ENCODE measurements at regions of chr4 and their contacts with region 1.

Region 1: GRCh38 chr4:15001869-15002658 is at the start of gene CPEB2:
- DNase-seq: peak; percentile 96
- H3K4me3 ChIP-seq: peak within 1 kb of the TSS; percentile 93
- H3K27ac ChIP-seq: peak within 1 kb of the TSS; percentile 91
- H3K4me1 ChIP-seq: peaks cover 22% of the 10 kb centered on the region
- CTCF ChIP-seq: no peak
- total RNA-seq, gene CPEB2: 2.2 and 2.3 TPM in 2 replicates

Region 2: GRCh38 chr4:13484122-13484748 is 1517.8 kb before region 1 on chr4 and contains the start of gene RAB28:
- CTCF ChIA-PET with region 1: no interaction called
- POLR2A ChIA-PET with region 1: interaction called, 4 read pairs
- intact Hi-C with region 1: loop called (anchors 5 kb)
- DNase-seq: peak; percentile 94
- H3K4me3 ChIP-seq: peak within 1 kb of the TSS; percentile 95
- H3K27ac ChIP-seq: peak within 1 kb of the TSS; percentile 56
- H3K4me1 ChIP-seq: peaks cover 20% of the 10 kb centered on the region
- CTCF ChIP-seq: no peak
- total RNA-seq, gene RAB28: 30.8 and 59.4 TPM in 2 replicates

Region 3: DNA sequence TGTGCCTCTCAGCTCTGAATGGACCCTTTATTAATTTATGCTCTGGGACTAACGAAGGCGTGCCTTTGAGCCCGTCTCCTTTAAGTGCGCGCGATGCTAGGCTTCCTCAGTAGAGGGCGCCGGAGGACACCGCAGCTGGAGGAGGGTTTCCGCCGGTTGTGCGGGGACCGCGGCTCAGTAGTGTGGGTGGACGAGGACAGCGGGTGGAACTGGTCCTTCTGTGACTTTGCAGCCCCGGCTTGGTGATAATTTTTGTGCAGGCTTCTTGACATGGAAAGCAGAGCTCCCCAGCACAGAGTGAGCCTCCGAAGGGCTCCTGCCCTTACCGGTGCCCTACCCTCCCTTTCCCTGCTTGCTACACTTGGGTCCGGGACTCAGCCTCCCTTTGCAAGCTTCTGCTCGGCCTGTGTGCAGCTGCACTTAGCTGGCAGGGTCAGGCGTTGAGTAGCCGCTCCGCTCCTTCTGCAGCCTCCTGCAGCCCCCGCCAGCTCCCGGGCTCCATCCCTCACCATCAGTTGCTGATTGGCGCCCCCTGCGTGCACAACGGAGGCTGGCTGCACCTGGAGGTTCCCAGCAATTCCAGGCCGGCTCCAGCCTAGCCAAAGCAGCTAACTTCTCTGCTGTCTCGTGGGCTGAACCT is 1347.8 kb before region 1 on chr4:
- CTCF ChIA-PET with region 1: no interaction called
- POLR2A ChIA-PET with region 1: interaction called, 3 read pairs
- intact Hi-C with region 1: loop called (anchors 10 kb)
- DNase-seq: peak; percentile 77
- H3K4me3 ChIP-seq: peak overlapping the region; percentile 70
- H3K27ac ChIP-seq: no peak overlapping the region
- H3K4me1 ChIP-seq: no peaks in the 10 kb centered on the region
- CTCF ChIP-seq: peak; percentile 83

Region 4: DNA sequence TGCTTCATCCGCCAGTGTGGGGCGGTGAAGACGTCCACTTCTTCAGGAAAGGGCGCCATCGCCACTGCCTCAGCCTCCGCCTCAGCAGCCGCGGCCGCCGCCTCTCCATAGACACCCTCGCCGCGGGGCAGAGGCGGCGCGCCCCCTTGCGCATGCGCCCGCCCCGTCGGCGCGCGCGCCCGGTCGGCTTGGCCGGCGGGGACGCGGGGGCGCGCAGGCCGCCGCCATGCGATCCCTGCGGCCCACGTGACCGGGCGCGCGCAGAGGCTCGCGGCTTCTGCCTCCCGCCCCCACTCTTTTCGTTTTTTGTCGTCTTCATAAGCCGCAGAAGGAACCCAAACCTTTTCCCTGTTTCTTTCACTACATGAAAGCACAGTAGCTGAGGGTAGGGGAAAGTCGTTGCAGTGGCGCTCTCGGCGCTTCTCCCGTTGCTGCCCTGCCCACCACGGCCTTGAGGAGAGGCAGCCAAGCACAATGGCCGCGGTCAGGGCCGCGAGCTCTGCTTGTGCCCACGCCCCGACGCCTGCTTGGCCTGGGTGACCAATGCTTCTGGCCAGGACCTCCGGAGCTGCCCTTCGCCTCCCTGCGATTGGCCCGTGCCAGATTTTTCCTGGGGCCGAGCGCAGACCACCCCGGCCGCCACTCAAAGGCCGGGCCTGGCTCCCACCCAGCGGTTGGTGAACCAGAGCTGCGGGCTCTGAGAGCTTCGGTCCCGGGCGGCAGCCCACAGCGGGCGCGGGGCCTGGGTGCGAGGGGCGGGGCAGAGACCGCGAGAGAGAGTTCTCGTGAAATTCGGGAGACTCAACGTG is 653.4 kb after region 1 on chr4 and contains the start of gene FBXL5:
- CTCF ChIA-PET with region 1: no interaction called
- POLR2A ChIA-PET with region 1: interaction called, 3 read pairs
- intact Hi-C with region 1: loop called (anchors 2 kb)
- DNase-seq: peak; percentile 92
- H3K4me3 ChIP-seq: peak within 1 kb of the TSS; percentile 92
- H3K27ac ChIP-seq: peak within 1 kb of the TSS; percentile 68
- H3K4me1 ChIP-seq: peaks cover 48% of the 10 kb centered on the region
- CTCF ChIP-seq: no peak
- total RNA-seq, gene FBXL5: 73.9 and 102 TPM in 2 replicates

Region 5: GRCh38 chr4:16225863-16226815 is 1224.1 kb after region 1 on chr4 and contains the start of gene TAPT1:
- CTCF ChIA-PET with region 1: no interaction called
- POLR2A ChIA-PET with region 1: no interaction called
- intact Hi-C with region 1: loop called (anchors 5 kb)
- DNase-seq: peak; percentile 81
- H3K4me3 ChIP-seq: peak within 1 kb of the TSS; percentile 71
- H3K27ac ChIP-seq: peak within 1 kb of the TSS; percentile 77
- H3K4me1 ChIP-seq: peaks cover 63% of the 10 kb centered on the region
- CTCF ChIP-seq: no peak
- total RNA-seq, gene TAPT1: 23.2 and 34.3 TPM in 2 replicates

Measured in OCI-LY7 (cell line).